ENCODE measurements at regions of chr6 and their contacts with region 1.

Region 1: GRCh38 chr6:56359201-56359899 is 112.0 kb upstream of the COL21A1 start:
- DNase-seq: peak; percentile 39
- ATAC-seq: peak; percentile 76 to 86

Region 2: GRCh38 chr6:56579155-56579851 is 220.0 kb after region 1 on chr6:
- intact Hi-C with region 1: loop called in 1 of 2 experiments (anchors 5 kb)
- DNase-seq: no peak
- ATAC-seq: no peak

Region 3: GRCh38 chr6:56595490-56596122 is 236.3 kb after region 1 on chr6:
- intact Hi-C with region 1: loop called (anchors 2 to 5 kb)
- DNase-seq: peak; percentile 40
- ATAC-seq: peak; percentile 73 to 77

Region 4: DNA sequence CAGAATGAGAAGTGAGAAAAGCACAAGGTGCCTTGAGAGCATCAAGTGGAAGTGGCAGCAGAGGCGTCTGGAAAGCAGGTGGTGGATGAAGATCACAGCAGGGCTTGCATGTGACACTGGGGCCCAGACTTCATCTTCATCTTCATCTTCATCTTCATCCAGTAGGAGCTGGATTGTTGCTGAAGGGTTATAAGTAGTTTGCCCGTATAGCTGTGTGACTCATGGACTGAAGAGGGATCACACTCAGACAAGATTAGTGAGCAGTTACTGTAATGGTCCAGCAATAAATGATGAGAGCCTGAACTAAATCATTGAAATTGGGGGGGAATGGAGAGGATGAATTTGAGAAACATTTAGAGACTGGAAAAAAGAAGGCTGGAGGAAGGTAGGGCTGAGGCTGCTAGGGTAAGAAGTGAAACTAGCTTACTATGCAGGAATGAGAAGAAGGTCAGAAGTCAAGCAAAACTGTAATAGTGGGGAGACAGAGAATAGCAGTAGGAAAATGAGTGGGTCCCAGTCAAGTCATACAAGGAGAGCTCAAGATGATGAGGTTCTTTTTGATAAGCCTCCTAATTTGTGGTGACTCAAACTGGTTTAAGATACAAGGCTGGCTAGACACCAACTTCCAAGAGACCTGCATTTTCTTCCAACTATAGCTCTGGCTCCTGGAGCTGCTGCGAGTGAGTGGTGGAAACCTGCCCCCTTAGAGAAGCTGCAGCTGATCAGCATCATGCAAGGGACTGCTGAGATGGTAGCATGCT is 503.2 kb after region 1 on chr6:
- intact Hi-C with region 1: loop called in 1 of 2 experiments (anchors 10 kb)
- DNase-seq: no peak
- ATAC-seq: peak; percentile 9 to 41